Aorta (tissue), 5 donors: ENCODE measurements at regions of chr1 and their contacts with region 1.

Region 1: DNA sequence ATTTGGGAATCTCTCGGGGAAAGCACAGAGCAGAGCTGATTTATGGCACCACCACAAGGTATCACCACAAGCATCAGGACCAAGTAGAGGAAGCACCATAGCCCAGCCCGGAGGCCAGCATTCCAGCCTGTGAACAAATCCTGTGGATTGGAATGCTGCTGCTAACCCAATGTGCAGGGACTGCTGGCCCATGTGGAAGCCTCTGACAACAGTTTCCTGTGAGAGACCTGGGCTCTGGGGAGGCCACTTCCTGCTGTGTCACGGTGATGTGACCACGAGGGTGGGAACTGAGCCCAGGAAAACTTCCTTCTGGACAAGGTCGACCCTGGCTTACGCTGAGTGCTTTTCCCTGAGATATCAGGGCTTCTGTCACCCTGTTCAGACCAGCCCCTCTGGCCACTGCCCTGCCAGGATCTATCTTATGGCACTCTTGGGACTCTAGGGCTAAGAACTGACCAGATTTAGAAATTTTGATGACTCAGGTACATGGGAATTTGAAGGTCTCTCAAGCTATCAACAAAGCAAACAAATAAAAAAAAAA is 88.3 kb upstream of the NGF start:
- DNase-seq: peak; percentile 91 to 92
- ATAC-seq: peak; percentile 80
- H3K4me3 ChIP-seq: no peak overlapping the region
- H3K27ac ChIP-seq: peak overlapping the region; percentile 12 to 31
- H3K4me1 ChIP-seq: peaks cover 0 to 2% of the 10 kb centered on the region in 2 donors
- H3K27me3 ChIP-seq: no peaks in the 10 kb centered on the region

Region 2: GRCh38 chr1:115184951-115185331 is 241.4 kb before region 1 on chr1:
- intact Hi-C with region 1: loop called in 1 of 2 experiments (anchors 5 kb)
- DNase-seq: peak in 1 of 2 donors; percentile 58
- ATAC-seq: peak; percentile 78
- H3K4me3 ChIP-seq: no peak overlapping the region
- H3K27ac ChIP-seq: peak overlapping the region; percentile 66 to 80
- H3K4me1 ChIP-seq: no peaks in the 10 kb centered on the region
- H3K27me3 ChIP-seq: no peaks in the 10 kb centered on the region

Region 3: DNA sequence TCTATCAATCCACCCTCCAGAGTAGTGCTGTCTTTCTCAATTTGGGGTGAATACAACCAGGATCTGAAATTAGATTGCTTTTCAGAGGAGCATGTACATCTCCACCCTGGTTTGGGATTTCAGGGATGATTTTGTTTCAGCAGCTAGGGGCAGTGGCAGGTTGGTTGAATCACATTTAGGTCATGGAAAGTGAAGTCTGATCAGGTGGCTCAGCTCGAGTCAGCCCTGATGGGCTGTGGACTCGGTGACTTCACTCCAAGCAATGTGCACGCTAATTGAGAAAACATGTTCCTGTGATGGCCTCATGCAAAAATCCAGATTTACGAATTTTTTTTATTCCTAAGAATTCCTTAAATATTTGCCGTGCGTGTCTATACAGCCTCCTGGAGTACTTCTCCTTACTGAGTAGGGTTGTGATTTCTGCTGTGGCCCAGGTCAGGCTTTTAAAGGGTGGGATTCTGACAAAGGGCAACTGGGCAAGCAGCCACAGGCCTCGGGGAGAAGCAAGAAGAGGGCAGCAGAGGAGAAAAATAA is 95.8 kb before region 1 on chr1:
- intact Hi-C with region 1: loop called (anchors 2 to 5 kb)
- DNase-seq: peak in 1 of 2 donors; percentile 73
- ATAC-seq: no peak
- H3K4me3 ChIP-seq: no peak overlapping the region
- H3K27ac ChIP-seq: peak overlapping the region; percentile 59 to 90
- H3K4me1 ChIP-seq: peaks cover 10 to 13% of the 10 kb centered on the region in 2 donors
- H3K27me3 ChIP-seq: no peaks in the 10 kb centered on the region

Region 4: GRCh38 chr1:115337633-115338456 is 88.5 kb before region 1 on chr1 and contains the start of gene NGF:
- intact Hi-C with region 1: loop called (anchors 1 to 5 kb)
- DNase-seq: peak; percentile 81 to 92
- ATAC-seq: peak; percentile 90
- H3K4me3 ChIP-seq: peak within 1 kb of the TSS; percentile 43 to 54
- H3K27ac ChIP-seq: peak within 1 kb of the TSS in 1 of 2 donors; percentile 65
- H3K4me1 ChIP-seq: peaks cover 0 to 14% of the 10 kb centered on the region in 2 donors
- H3K27me3 ChIP-seq: no peaks in the 10 kb centered on the region
- total RNA-seq, gene NGF: 10.2 to 17.2 TPM